ENCODE measurements at regions of chr5 and their contacts with region 1.

Region 1: GRCh38 chr5:96595300-96596090 is 66.7 kb upstream of the CAST start:
- DNase-seq: no peak
- H3K4me3 ChIP-seq: no peak overlapping the region
- H3K27ac ChIP-seq: no peak overlapping the region
- H3K4me1 ChIP-seq: no peaks in the 10 kb centered on the region
- H3K27me3 ChIP-seq: no peaks in the 10 kb centered on the region
- CTCF ChIP-seq: no peak
- EP300 ChIP-seq: no peak
- POLR2A ChIP-seq: no peak

Region 2: GRCh38 chr5:95620030-95620869 is 975.2 kb before region 1 on chr5 and contains the start of gene GPR150:
- intact Hi-C with region 1: loop called in 1 of 4 experiments (anchors 10 kb)
- DNase-seq: peak in 2 of 5 donors; percentile 30 to 50
- H3K4me3 ChIP-seq: peak within 1 kb of the TSS; percentile 43
- H3K27ac ChIP-seq: no peak within 1 kb of the TSS
- H3K4me1 ChIP-seq: peaks cover 8% of the 10 kb centered on the region
- H3K27me3 ChIP-seq: no peaks in the 10 kb centered on the region
- CTCF ChIP-seq: no peak
- EP300 ChIP-seq: no peak
- POLR2A ChIP-seq: no peak
- total RNA-seq, gene GPR150: 0.10 to 0.50 (median 0.10) TPM in 3 of 7 donors, not detected in the others

Region 3: DNA sequence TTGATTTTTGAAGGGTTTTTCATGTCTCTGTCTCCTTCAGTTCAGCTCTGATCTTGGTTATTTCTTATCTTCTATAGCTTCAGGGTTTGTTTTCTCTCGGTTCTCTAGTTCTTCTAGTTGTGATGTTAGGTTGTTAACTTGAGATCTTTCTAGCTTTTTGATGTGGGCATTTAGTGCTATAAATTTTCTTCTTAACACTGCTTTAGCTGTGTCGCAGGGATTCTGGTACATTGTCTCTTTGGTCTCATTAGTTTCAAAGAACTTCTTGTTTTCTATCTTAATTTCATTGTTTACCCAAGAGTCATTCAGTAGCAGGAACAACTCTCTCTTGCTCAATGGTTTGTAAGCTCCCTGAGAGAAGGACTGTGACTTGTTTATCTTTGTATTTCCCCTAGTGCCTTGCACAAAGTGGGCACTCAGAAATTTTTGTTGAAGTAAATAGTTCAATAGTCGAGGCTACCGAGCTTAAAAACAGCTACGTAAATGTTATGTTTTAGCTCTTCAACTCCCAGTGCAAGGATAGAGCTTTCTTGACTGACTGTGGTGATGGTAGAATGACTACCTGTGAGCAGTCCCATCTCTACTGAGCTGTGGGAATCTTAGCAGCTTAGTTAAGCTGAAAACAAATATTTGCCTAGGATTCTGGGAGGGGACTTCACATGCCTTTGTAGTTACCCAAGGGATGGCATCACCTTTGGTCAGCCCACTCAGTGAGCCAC is 408.0 kb before region 1 on chr5:
- intact Hi-C with region 1: no loop called
- DNase-seq: no peak
- H3K4me3 ChIP-seq: no peak overlapping the region
- H3K27ac ChIP-seq: no peak overlapping the region
- H3K4me1 ChIP-seq: no peaks in the 10 kb centered on the region
- H3K27me3 ChIP-seq: no peaks in the 10 kb centered on the region
- CTCF ChIP-seq: no peak
- EP300 ChIP-seq: no peak
- POLR2A ChIP-seq: no peak

Region 4: GRCh38 chr5:96344678-96345577 is 250.6 kb before region 1 on chr5:
- intact Hi-C with region 1: loop called in 3 of 4 experiments (anchors 5 kb)
- DNase-seq: no peak
- H3K4me3 ChIP-seq: no peak overlapping the region
- H3K27ac ChIP-seq: no peak overlapping the region
- H3K4me1 ChIP-seq: no peaks in the 10 kb centered on the region
- H3K27me3 ChIP-seq: no peaks in the 10 kb centered on the region
- CTCF ChIP-seq: peak in 1 of 3 donors; percentile 30
- EP300 ChIP-seq: no peak
- POLR2A ChIP-seq: no peak

Region 5: DNA sequence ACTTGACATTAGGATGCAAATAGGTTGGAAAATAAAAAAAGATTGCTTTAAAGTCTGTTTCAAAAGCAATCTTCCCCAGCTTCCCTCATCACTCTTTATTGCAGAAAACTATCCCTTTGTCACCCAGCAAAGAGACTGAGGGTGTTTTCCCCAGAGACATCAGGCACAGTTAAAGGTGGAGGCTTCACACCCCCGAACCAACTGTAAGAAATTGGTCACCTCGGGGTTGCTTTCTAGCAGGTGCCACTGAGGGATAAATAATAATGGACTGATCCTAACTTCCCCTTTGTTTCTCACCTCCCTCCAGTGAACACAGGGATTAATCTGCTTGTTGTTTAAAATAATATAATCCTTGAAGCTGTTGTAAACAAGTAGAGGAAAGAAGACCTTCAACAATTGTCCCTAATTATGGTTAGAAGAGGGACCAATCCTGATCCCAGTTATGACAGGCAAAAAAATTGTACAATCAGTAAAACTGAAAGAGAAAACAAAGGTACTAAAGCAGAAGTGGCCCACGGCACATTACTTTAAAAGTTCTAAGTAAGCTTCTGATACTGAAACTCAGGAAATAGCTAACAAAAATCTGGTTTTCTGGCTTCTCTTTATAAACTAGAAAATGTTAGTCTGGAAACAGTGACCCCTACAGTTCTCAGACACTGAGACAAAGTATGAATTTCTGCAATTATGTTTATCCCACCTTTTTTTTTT is 155.9 kb before region 1 on chr5:
- intact Hi-C with region 1: no loop called
- DNase-seq: no peak
- H3K4me3 ChIP-seq: no peak overlapping the region
- H3K27ac ChIP-seq: no peak overlapping the region
- H3K4me1 ChIP-seq: no peaks in the 10 kb centered on the region
- H3K27me3 ChIP-seq: no peaks in the 10 kb centered on the region
- CTCF ChIP-seq: no peak
- EP300 ChIP-seq: no peak
- POLR2A ChIP-seq: no peak

Region 6: DNA sequence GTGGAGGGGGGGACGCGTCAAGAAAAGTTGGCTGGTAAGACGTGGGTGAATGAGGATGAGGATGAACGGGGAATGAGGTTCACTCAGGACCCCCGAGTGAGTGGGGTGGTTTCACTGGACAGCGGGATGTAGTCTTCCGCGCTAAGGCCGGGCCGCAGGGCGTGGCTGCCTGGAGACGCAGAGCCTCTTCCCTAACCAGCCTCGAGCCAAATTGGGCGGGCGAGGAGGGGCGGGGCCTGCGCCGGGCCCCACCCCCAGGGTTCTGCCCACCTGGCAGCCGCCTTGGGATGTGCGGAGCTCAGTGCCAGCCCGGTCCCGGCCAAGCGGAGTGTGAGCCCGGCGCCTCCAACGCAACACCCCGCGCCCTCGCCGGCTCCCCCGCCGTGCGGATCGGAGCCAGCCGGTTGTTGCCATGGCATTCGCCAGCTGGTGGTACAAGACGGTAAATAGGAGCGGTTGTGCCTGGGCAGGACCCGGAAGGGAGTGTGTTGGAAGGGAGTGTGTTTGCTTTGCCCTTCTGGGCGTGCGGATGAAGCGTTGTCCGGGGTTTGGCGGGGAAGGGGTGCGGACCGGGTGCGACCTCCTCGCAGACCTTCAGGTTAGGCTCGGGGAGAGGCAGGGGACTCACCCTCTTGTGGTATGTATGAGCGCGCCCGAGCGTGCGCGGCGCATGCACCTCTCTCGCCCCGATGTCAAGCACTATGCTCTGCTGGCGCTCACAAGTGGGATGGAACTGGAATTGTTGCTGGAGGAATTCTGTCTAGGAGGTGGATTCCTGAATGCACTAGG is 67.4 kb after region 1 on chr5:
- intact Hi-C with region 1: no loop called
- DNase-seq: peak; percentile 91 to 98 (median 93)
- H3K4me3 ChIP-seq: peak overlapping the region; percentile 97
- H3K27ac ChIP-seq: peak overlapping the region; percentile 91 to 99
- H3K4me1 ChIP-seq: no peaks in the 10 kb centered on the region
- H3K27me3 ChIP-seq: no peaks in the 10 kb centered on the region
- CTCF ChIP-seq: peak in 1 of 3 donors; percentile 12
- EP300 ChIP-seq: no peak
- POLR2A ChIP-seq: peak; percentile 61

Measured in ovary (tissue), 10 donors.